ENCODE measurements at regions of chr20 and their contacts with region 1.

Region 1: GRCh38 chr20:24100385-24101011 is 111.9 kb upstream of the GGTLC1 start:
- DNase-seq: peak; percentile 76
- H3K4me3 Mint-ChIP-seq: no peak overlapping the region
- H3K27ac Mint-ChIP-seq: peak overlapping the region; percentile 77
- H3K4me1 Mint-ChIP-seq: peaks cover 33% of the 10 kb centered on the region
- H3K27me3 Mint-ChIP-seq: peaks cover 5% of the 10 kb centered on the region

Region 2: GRCh38 chr20:23889775-23890211 is 210.7 kb before region 1 on chr20:
- CTCF ChIA-PET with region 1: no interaction called
- intact Hi-C with region 1: loop called (anchors 1 kb)
- DNase-seq: peak; percentile 77
- H3K4me3 Mint-ChIP-seq: no peak overlapping the region
- H3K27ac Mint-ChIP-seq: no peak overlapping the region
- H3K4me1 Mint-ChIP-seq: no peaks in the 10 kb centered on the region
- H3K27me3 Mint-ChIP-seq: peaks cover 3% of the 10 kb centered on the region

Region 3: GRCh38 chr20:23995905-23996666 is 104.4 kb before region 1 on chr20:
- CTCF ChIA-PET with region 1: interaction called, 4 read pairs
- intact Hi-C with region 1: loop called (anchors 1 kb)
- DNase-seq: peak; percentile 69
- H3K4me3 Mint-ChIP-seq: no peak overlapping the region
- H3K27ac Mint-ChIP-seq: no peak overlapping the region
- H3K4me1 Mint-ChIP-seq: peaks cover 2% of the 10 kb centered on the region
- H3K27me3 Mint-ChIP-seq: no peaks in the 10 kb centered on the region

Region 4: GRCh38 chr20:24045621-24046318 is 54.7 kb before region 1 on chr20:
- CTCF ChIA-PET with region 1: interaction called, 5 read pairs
- intact Hi-C with region 1: loop called (anchors 1 kb)
- DNase-seq: peak; percentile 74
- H3K4me3 Mint-ChIP-seq: no peak overlapping the region
- H3K27ac Mint-ChIP-seq: peak overlapping the region; percentile 61
- H3K4me1 Mint-ChIP-seq: peaks cover 42% of the 10 kb centered on the region
- H3K27me3 Mint-ChIP-seq: no peaks in the 10 kb centered on the region

Region 5: DNA sequence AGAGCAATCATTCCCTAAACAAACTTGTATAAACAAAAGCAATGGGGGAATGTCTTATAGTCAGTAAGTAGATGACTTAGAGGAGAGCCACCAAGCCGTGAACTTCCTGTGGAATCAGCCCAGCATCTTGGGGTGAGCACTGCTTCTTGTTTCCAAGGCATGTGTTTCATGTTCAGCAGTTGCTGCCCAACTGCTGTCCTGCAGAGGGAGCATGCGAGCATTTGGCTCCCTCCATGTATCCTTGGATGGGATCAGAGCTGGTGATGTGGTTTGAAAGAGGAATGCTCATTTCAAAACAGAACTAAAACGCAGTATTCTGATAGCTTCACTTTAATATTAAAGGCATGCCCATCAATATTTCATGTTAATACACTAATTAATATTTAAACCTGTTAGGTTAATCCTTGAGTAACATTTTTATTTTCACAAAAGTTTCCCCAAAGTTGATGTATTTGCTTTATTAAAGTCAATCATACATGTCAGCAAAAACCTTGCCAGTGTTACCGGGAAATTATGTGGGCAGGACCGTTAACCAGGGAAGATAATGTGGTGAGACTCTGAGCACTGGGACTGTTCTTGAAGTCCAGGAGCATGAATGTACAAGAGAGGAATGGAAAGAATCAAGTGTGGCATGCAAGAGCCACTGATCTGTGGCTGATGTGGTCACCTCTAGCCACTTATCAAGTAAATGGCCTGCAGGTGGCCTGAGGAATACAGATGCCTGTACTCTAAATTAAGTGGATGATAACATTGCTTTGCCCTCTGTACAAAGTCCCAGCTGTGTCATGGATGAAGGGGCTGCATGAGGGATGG is 60.3 kb after region 1 on chr20:
- CTCF ChIA-PET with region 1: interaction called, 5 read pairs
- intact Hi-C with region 1: loop called (anchors 1 kb)
- DNase-seq: peak; percentile 40
- H3K4me3 Mint-ChIP-seq: no peak overlapping the region
- H3K27ac Mint-ChIP-seq: no peak overlapping the region
- H3K4me1 Mint-ChIP-seq: no peaks in the 10 kb centered on the region
- H3K27me3 Mint-ChIP-seq: peaks cover 2% of the 10 kb centered on the region

Region 6: GRCh38 chr20:24406750-24407510 is 306.4 kb after region 1 on chr20:
- CTCF ChIA-PET with region 1: no interaction called
- intact Hi-C with region 1: loop called (anchors 5 kb)
- DNase-seq: peak; percentile 41
- H3K4me3 Mint-ChIP-seq: peak overlapping the region; percentile 20
- H3K27ac Mint-ChIP-seq: peak overlapping the region; percentile 73
- H3K4me1 Mint-ChIP-seq: peaks cover 27% of the 10 kb centered on the region
- H3K27me3 Mint-ChIP-seq: no peaks in the 10 kb centered on the region

Region 7: GRCh38 chr20:24917797-24918578 is 817.5 kb after region 1 on chr20:
- CTCF ChIA-PET with region 1: interaction called, 3 read pairs
- intact Hi-C with region 1: loop called (anchors 5 kb)
- DNase-seq: peak; percentile 65
- H3K4me3 Mint-ChIP-seq: no peak overlapping the region
- H3K27ac Mint-ChIP-seq: no peak overlapping the region
- H3K4me1 Mint-ChIP-seq: peaks cover 5% of the 10 kb centered on the region
- H3K27me3 Mint-ChIP-seq: peaks cover 7% of the 10 kb centered on the region